ENCODE measurements at regions of chr1 and their contacts with region 1.

Region 1: GRCh38 chr1:24861821-24862727 is 68.0 kb downstream of the RUNX3 start:
- DNase-seq: peak in 1 of 2 donors; percentile 61
- ATAC-seq: no peak
- H3K4me3 ChIP-seq: no peak overlapping the region
- H3K27ac ChIP-seq: no peak overlapping the region
- H3K4me1 ChIP-seq: no peaks in the 10 kb centered on the region
- H3K27me3 ChIP-seq: no peaks in the 10 kb centered on the region

Region 2: DNA sequence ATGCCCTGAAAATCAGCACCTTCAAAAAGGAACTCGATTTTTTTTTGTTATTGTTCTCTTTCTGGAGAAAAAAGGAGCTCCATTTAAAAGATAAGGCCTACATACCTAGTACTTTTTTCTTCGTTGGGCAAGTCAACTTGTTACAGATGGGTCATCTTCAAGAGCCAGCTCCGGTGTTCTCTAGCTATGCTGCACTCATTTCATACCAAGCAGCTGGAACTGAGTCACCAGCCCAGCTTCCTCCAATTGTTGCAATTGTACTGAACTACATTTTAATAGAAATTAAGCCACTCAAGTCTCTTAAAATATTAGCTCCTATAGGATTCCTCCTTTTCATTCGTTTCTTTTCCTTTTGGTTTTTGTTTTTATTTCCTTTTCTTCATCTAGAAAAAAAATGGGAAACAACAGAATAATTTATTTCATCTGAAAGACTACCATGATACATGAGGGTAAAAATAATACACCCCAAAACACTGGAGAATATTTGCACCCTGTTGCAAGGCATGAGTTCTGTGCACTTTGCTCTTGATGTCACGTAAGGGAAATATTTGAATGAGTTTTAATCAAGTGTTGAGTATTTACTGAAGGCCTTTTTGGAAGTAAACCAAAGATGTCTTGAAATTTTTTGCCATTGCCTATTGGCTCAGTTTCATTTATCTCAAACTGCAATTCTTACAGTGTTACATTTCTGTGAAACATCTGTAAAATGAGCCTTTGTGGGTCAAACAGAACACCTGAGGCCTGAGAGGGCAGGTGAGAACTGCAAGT is 56.4 kb before region 1 on chr1:
- intact Hi-C with region 1: no loop called
- DNase-seq: no peak
- ATAC-seq: peak; percentile 55
- H3K4me3 ChIP-seq: no peak overlapping the region
- H3K27ac ChIP-seq: no peak overlapping the region
- H3K4me1 ChIP-seq: peaks cover 4 to 5% of the 10 kb centered on the region in 2 donors
- H3K27me3 ChIP-seq: no peaks in the 10 kb centered on the region

Region 3: DNA sequence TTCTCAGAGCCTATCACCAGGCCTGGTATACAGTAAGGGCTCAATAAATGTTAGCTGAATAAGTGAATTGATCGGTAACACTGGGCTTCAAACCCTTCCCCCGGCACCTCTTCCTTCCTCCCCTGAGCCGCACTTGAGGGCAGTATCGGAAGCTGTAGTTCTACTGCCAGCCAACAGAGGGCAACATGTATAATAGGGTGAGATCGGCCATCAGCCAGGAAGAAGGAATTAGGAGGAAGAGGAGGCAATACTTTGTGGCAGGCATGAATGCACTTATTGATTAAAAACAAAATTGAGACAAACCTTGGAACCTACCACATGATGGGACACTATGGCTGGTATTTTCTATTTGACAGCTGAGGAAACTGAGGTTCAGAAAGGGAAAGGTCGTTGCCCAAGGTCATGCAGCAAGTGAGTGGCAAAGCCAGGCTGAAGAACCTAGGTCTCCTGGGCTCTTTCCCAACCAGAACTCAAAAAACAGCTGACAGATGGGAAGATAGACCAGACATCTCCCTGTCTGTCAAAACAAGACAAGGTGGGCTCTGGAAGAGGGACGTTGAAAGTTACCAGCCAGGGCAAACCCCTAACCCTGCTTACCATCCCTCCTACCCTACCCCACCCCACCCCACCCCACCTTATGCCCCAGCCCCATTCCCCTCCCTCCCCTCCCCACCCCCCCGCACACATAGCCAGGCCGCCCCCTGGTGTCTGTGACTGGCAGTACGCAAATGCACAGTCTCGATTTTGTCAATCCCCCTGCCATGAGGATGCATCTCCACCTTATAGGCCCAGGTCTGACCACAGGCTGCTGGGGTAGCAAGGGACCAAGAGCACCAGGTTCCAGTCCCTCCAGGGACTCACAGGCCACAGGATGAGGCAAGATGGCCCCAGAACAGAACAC is 175.3 kb after region 1 on chr1:
- intact Hi-C with region 1: loop called in 1 of 2 experiments (anchors 10 kb)
- DNase-seq: no peak
- ATAC-seq: no peak
- H3K4me3 ChIP-seq: no peak overlapping the region
- H3K27ac ChIP-seq: no peak overlapping the region
- H3K4me1 ChIP-seq: no peaks in the 10 kb centered on the region
- H3K27me3 ChIP-seq: no peaks in the 10 kb centered on the region